Panc1 (cell line): ENCODE measurements at regions of chr11 and their contacts with region 1.

Region 1: GRCh38 chr11:73404048-73404447 is 27.8 kb downstream of the RELT start:
- DNase-seq: no peak
- ATAC-seq: peak; percentile 72
- H3K4me3 ChIP-seq: no peak overlapping the region
- H3K27ac ChIP-seq: no peak overlapping the region
- H3K4me1 ChIP-seq: no peaks in the 10 kb centered on the region
- H3K27me3 ChIP-seq: no peaks in the 10 kb centered on the region
- CTCF ChIP-seq: peak; percentile 77

Region 2: DNA sequence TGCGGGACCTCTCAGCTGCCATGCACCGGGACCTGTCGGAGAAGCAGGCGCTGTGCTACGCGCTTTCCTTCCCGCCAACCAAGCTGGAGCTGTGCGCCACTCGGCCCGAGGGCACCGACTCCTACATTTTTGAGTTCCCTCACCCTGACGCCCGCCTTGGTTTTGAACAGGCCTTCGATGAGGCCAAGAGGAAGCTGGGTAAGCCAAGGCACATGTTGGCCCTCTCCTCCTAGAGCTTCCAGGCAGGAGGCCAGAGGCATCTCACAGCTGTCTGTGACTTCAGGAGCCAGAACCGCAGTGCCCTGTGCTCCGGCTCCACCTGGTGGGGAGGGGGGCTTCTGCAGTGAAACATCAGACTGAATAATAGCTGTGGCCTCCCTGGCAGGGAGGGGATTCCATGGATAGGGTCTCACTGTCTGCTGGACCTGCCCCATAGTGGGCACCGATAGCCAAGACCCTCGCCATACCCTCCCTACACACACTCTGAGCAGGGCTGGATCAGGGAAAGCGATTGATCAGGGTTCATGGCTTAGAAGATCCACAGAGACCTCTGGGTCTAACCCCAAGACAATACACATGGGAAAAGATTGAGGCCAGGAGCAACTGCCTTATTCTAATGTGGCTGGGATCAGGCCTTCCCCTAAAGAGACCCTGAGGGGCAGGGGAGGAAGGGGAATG is 43.6 kb before region 1 on chr11:
- CTCF ChIA-PET with region 1: no interaction called
- POLR2A ChIA-PET with region 1: interaction called, 10 read pairs
- in situ Hi-C with region 1: no loop called
- intact Hi-C with region 1: no loop called
- DNase-seq: no peak
- ATAC-seq: peak; percentile 69
- H3K4me3 ChIP-seq: no peak overlapping the region
- H3K27ac ChIP-seq: no peak overlapping the region
- H3K4me1 ChIP-seq: no peaks in the 10 kb centered on the region
- H3K27me3 ChIP-seq: no peaks in the 10 kb centered on the region
- CTCF ChIP-seq: peak; percentile 89; the same call in 1 of the 2 replicates

Region 3: DNA sequence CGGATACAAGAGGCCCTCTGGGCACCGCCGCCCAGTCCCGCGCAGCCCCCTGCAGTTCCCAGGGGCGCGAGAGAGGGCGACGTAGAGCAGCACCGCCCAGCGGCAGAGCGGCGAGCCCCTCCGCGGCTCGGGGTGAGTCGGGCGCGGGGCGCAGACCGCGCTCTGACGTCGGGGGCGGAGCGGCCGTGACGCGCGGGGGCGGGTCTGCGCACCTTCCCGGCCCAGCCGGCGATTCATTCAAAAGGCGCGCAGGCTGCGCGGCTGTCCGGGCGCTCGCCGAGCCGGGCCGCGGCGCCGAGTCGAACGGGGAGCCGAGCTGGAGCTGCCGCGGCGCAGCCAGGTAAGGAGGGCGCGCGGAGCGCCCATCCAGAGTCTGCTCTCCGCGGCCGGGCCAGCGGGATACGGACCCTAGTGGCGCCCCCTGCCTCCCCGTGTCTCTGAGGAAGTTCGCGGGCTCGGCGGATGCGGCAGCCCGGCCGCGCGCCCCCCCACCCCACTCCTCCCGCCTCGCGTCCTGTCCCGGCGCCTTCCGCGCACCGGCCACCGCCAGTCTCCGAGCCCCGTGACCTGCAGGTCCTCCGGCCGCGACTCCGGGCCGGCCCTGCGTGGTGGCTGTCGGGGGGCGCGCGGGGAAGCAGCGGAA is 27.8 kb before region 1 on chr11 and contains the start of gene RELT:
- CTCF ChIA-PET with region 1: no interaction called
- POLR2A ChIA-PET with region 1: no interaction called
- in situ Hi-C with region 1: no loop called
- intact Hi-C with region 1: no loop called
- DNase-seq: peak; percentile 53
- ATAC-seq: peak; percentile 93
- H3K4me3 ChIP-seq: peak within 1 kb of the TSS; percentile 76 to 86
- H3K27ac ChIP-seq: peak within 1 kb of the TSS; percentile 81
- H3K4me1 ChIP-seq: peaks cover 22% of the 10 kb centered on the region
- H3K27me3 ChIP-seq: no peaks in the 10 kb centered on the region
- CTCF ChIP-seq: peak; percentile 100
- total RNA-seq, gene RELT: 11.3 TPM